ENCODE measurements at regions of chr4 and their contacts with region 1.

Region 1: DNA sequence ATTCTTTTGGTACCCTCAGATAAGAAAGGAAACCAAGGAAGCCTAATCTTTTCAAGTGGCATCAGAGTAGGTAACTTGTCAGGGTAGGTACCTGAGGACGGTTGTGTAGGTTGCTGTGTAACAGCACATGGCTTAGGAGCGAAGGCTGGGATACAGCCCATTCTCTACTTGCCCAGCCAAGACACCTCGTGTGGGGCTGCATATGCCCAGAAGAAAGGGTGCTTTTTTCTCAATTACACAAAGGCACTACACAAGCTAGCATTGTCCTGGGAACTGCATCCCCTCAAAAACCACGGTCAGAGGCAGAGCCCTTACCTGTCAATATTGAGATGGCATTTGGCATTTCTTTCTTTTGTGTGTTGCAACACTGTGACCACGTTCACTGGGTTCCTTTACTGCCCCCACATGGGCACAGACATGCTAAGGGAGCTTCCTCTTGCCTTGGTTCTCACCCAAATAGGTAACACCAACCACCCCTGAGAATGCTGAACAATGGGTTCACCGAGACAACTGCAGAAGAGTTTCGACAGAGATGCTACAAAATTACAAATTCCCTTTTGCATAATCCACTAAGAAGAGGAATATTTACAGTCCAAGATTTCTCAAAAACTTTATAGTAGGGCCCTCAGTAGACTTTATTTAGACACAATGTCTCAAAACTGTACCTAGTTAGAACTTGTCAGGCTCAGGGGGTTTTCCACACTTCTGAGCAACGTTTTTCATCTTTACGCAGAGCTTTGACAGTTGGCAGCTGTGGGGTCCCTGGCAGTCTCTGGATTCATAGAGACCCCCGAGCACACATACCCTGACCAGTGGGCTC is 35.8 kb upstream of the TNIP3 start:
- DNase-seq: peak; percentile 51
- ATAC-seq: peak; percentile 74
- H3K4me3 Mint-ChIP-seq: peak overlapping the region; percentile 3
- H3K27ac Mint-ChIP-seq: peak overlapping the region; percentile 27
- H3K4me1 Mint-ChIP-seq: peaks cover 24% of the 10 kb centered on the region
- H3K27me3 Mint-ChIP-seq: no peaks in the 10 kb centered on the region

Region 2: GRCh38 chr4:121217351-121217750 is 17.4 kb after region 1 on chr4:
- CTCF ChIA-PET with region 1: interaction called, 28 read pairs
- POLR2A ChIA-PET with region 1: interaction called, 3 read pairs
- DNase-seq: no peak
- ATAC-seq: no peak
- H3K4me3 Mint-ChIP-seq: no peak overlapping the region
- H3K27ac Mint-ChIP-seq: no peak overlapping the region
- H3K4me1 Mint-ChIP-seq: peaks cover 28% of the 10 kb centered on the region
- H3K27me3 Mint-ChIP-seq: no peaks in the 10 kb centered on the region

Region 3: DNA sequence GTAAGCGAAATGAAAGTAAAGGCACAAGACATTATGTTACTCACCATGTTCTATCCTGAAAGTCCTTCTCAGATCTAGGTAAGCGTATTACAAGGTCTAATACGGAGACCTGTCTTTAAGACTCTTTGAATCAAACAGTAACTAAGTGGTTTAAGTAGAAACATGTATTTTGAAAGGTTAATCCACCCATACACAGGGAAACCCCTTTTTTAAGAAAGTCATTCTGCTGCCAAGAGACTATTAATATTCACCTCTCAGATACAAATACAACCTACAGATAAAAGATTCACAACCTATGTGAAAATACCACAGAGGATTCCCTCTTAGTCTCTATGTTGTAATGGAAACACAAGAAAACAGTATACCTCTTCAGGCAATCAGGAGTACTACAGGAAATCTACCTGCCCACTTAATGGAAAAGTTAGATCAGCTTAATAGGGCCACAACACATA is 27.4 kb after region 1 on chr4:
- CTCF ChIA-PET with region 1: interaction called, 28 read pairs
- POLR2A ChIA-PET with region 1: no interaction called
- DNase-seq: no peak
- ATAC-seq: peak; percentile 72
- H3K4me3 Mint-ChIP-seq: peak overlapping the region; percentile 51
- H3K27ac Mint-ChIP-seq: peak overlapping the region; percentile 13
- H3K4me1 Mint-ChIP-seq: peaks cover 13% of the 10 kb centered on the region
- H3K27me3 Mint-ChIP-seq: no peaks in the 10 kb centered on the region

Region 4: GRCh38 chr4:121243485-121243884 is 43.5 kb after region 1 on chr4:
- CTCF ChIA-PET with region 1: interaction called, 16 read pairs
- POLR2A ChIA-PET with region 1: no interaction called
- DNase-seq: no peak
- ATAC-seq: no peak
- H3K4me3 Mint-ChIP-seq: peak overlapping the region; percentile 20
- H3K27ac Mint-ChIP-seq: peak overlapping the region; percentile 14
- H3K4me1 Mint-ChIP-seq: peaks cover 2% of the 10 kb centered on the region
- H3K27me3 Mint-ChIP-seq: no peaks in the 10 kb centered on the region